CD8-positive, alpha-beta T cell (primary cell): ENCODE measurements at regions of chr10 and their contacts with region 1.

Region 1: DNA sequence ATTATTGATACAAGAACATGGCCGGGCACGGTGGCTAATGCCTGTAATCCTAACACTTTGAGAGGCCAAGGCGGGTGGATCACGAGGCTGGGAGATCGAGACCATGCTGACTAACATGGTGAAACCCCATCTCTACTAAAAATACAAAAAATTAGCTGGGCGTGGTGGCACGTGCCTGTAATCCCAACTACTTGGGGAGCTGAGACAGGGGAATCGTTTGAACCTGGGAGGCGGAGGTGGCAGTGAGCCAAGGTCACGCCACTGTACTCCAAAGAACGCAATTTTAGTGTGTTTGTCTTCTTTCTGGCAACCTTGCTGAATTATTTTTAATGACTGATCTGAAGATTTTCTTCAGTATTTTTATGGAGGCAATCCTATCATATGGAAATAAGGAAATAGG is 46.2 kb downstream of the IDE start:
- DNase-seq: no peak
- ATAC-seq: no peak
- H3K4me3 ChIP-seq: no peak overlapping the region
- H3K4me3 Mint-ChIP-seq: no peak overlapping the region
- H3K27ac ChIP-seq: no peak overlapping the region
- H3K27ac Mint-ChIP-seq: no peak overlapping the region
- H3K4me1 ChIP-seq: no peaks in the 10 kb centered on the region
- H3K4me1 Mint-ChIP-seq: no peaks in the 10 kb centered on the region
- H3K27me3 ChIP-seq: no peaks in the 10 kb centered on the region
- H3K27me3 Mint-ChIP-seq: no peaks in the 10 kb centered on the region
- CTCF ChIP-seq: no peak

Region 2: DNA sequence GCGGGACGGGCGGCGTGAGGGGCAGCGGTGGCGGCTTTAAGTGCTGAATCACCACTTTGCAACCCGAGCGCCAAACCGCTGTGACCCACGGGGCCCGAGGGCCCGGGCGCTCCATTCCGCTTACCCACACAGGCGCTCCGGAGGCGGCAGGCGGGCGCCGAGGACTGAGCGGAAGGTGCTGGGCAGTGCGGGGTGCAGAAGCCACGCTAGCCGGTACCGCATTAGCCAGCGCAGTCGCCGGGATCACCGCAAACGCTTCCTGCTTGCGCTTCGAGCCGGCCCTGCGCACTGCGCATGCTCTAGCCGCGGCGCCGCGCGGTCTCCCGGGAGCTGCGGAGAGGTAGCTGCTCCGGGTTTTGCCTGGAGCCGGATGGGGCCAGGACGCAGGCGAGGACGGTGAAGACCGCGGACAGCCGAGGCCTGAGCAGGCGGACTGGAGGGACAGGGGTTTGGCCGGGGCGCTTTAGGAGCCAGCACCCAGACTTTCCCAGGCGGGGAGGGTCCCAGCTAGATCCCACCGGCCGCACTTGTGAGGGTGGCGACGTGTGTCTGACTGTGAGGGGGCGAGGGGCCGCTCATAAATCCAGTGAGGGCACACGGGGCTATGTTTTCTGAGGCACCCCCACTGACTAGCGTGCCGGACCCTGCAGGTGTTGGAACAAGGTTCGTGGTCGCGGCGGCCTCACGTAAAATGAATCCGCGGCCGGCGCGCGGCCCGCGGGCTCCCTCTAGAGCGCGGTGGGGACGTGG is 46.3 kb after region 1 on chr10 and contains the start of gene IDE:
- CTCF ChIA-PET with region 1: interaction called, 14 read pairs
- POLR2A ChIA-PET with region 1: no interaction called
- intact Hi-C with region 1: no loop called
- DNase-seq: peak; percentile 43 to 89 (median 76)
- ATAC-seq: peak; percentile 70
- H3K4me3 ChIP-seq: peak within 1 kb of the TSS; percentile 85 to 100
- H3K4me3 Mint-ChIP-seq: peak within 1 kb of the TSS; percentile 93
- H3K27ac ChIP-seq: peak within 1 kb of the TSS; percentile 74 to 92
- H3K27ac Mint-ChIP-seq: peak within 1 kb of the TSS; percentile 93
- H3K4me1 ChIP-seq: peaks cover 18% of the 10 kb centered on the region
- H3K4me1 Mint-ChIP-seq: peaks cover 42% of the 10 kb centered on the region
- H3K27me3 ChIP-seq: no peaks in the 10 kb centered on the region
- H3K27me3 Mint-ChIP-seq: no peaks in the 10 kb centered on the region
- CTCF ChIP-seq: no peak
- total RNA-seq, gene IDE: 12.1 to 13.2 TPM

Region 3: DNA sequence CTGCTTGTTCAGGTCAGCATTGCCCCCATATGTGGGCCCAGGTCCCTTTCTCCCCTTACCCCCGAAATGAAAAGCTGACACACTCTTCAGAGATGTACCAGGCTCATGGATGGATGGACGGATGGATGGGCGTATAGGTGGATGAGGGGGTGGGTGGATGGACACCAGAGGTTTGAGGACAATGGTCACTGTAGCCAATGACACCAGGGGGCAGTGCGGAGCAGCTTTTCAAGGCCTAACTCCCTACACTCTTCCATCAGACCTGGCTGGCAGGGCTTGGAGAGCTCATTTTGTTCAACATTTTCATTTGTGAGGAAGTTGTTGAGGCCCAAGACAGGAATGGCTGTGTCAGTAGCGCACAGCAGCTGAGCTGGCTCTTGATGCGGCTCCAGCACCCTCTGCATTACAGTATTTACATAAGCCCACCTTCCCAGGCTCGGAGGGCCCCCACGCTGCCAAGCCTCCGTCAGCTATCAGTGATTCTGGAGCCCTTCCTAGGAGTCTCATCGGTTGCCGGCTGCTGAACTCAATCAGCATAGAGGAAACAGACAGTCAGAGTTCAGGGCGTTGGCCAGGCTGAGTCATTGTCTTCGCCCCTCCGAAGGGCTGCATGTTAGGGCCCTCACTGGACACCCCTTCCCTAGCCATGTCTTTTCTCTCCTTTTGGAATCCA is 1027.2 kb after region 1 on chr10:
- CTCF ChIA-PET with region 1: no interaction called
- POLR2A ChIA-PET with region 1: no interaction called
- intact Hi-C with region 1: no loop called
- DNase-seq: peak in 7 of 9 experiments; percentile 19 to 55 (median 31)
- ATAC-seq: no peak
- H3K4me3 ChIP-seq: no peak overlapping the region
- H3K4me3 Mint-ChIP-seq: no peak overlapping the region
- H3K27ac ChIP-seq: no peak overlapping the region
- H3K27ac Mint-ChIP-seq: no peak overlapping the region
- H3K4me1 ChIP-seq: no peaks in the 10 kb centered on the region
- H3K4me1 Mint-ChIP-seq: no peaks in the 10 kb centered on the region
- H3K27me3 ChIP-seq: no peaks in the 10 kb centered on the region
- H3K27me3 Mint-ChIP-seq: peaks cover 14% of the 10 kb centered on the region
- CTCF ChIP-seq: peak; percentile 42